Posterior vena cava (tissue), 2 donors: ENCODE measurements at regions of chr14 and their contacts with region 1.

Region 1: GRCh38 chr14:86865934-86866333 is 1127.0 kb downstream of the GALC start:
- DNase-seq: no peak

Region 2: GRCh38 chr14:86838363-86838762 is 27.6 kb before region 1 on chr14:
- intact Hi-C with region 1: loop called in 1 of 2 experiments (anchors 2 kb)
- DNase-seq: no peak

Region 3: DNA sequence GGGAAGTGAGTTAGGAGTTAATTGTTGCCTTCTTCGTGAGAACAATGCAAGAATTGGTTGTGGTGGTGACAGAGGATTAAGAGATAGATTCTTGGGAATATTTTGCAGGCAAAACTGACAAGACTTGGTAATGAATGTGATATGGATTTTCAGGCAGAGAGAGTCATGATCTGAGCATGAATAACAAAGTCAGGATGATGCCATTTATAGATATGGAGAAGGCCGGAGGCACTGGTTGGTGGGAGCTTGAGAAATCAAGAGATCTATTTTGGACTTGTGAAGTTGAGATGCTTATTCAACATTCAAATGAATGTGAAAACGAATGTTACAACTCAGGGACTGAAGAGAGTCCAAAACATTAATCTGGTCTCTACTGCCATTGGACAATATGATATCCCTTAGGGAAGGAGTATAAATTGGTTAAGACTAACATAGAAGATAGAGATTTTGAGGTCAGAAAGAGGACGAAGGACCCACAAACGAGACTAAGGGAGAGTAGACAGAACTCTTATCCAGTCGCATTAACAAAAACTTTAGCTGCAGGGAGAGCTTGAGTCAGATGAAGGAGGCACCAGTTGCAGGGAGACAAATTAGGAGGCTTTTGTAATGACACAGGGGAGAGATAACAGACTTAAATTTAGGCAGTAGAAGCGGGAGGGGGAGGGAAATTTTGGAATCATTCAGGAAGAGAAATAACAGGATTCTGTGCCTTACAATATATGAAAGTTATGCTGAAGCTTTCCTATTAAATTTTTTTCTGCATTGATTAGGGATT is 36.4 kb after region 1 on chr14:
- intact Hi-C with region 1: no loop called
- DNase-seq: no peak